CD8-positive, alpha-beta T cell (primary cell): ENCODE measurements at regions of chr22 and their contacts with region 1.

Region 1: GRCh38 chr22:41957941-41958556 is 6.1 kb downstream of the SMIM45 start:
- DNase-seq: peak in 1 of 9 experiments; percentile 32
- ATAC-seq: peak; percentile 35
- H3K4me3 ChIP-seq: no peak overlapping the region
- H3K4me3 Mint-ChIP-seq: peak overlapping the region; percentile 11
- H3K27ac ChIP-seq: no peak overlapping the region
- H3K27ac Mint-ChIP-seq: no peak overlapping the region
- H3K4me1 ChIP-seq: no peaks in the 10 kb centered on the region
- H3K4me1 Mint-ChIP-seq: peaks cover 3% of the 10 kb centered on the region
- H3K27me3 ChIP-seq: peaks cover 0 to 6% of the 10 kb centered on the region in 2 experiments
- H3K27me3 Mint-ChIP-seq: no peaks in the 10 kb centered on the region
- CTCF ChIP-seq: peak; percentile 53

Region 2: GRCh38 chr22:41822317-41823060 is 135.6 kb before region 1 on chr22:
- CTCF ChIA-PET with region 1: interaction called, 3 read pairs
- POLR2A ChIA-PET with region 1: no interaction called
- intact Hi-C with region 1: loop called (anchors 1 kb)
- DNase-seq: peak in 5 of 9 experiments; percentile 21 to 88 (median 48)
- ATAC-seq: peak; percentile 95
- H3K4me3 ChIP-seq: no peak overlapping the region
- H3K4me3 Mint-ChIP-seq: no peak overlapping the region
- H3K27ac ChIP-seq: no peak overlapping the region
- H3K27ac Mint-ChIP-seq: peak overlapping the region; percentile 72
- H3K4me1 ChIP-seq: no peaks in the 10 kb centered on the region
- H3K4me1 Mint-ChIP-seq: peaks cover 8% of the 10 kb centered on the region
- H3K27me3 ChIP-seq: no peaks in the 10 kb centered on the region
- H3K27me3 Mint-ChIP-seq: no peaks in the 10 kb centered on the region
- CTCF ChIP-seq: peak; percentile 57

Region 3: GRCh38 chr22:41925655-41926460 is 32.2 kb before region 1 on chr22:
- CTCF ChIA-PET with region 1: interaction called, 3 read pairs
- POLR2A ChIA-PET with region 1: no interaction called
- intact Hi-C with region 1: loop called in 1 of 2 experiments (anchors 1 kb)
- DNase-seq: peak; percentile 61 to 86 (median 80)
- ATAC-seq: peak; percentile 75
- H3K4me3 ChIP-seq: peak overlapping the region; percentile 43 to 57
- H3K4me3 Mint-ChIP-seq: peak overlapping the region; percentile 85
- H3K27ac ChIP-seq: no peak overlapping the region
- H3K27ac Mint-ChIP-seq: peak overlapping the region; percentile 69
- H3K4me1 ChIP-seq: peaks cover 18% of the 10 kb centered on the region
- H3K4me1 Mint-ChIP-seq: peaks cover 25% of the 10 kb centered on the region
- H3K27me3 ChIP-seq: peaks cover 0 to 3% of the 10 kb centered on the region in 2 experiments
- H3K27me3 Mint-ChIP-seq: no peaks in the 10 kb centered on the region
- CTCF ChIP-seq: peak; percentile 88

Region 4: GRCh38 chr22:41979423-41980250 is 21.6 kb after region 1 on chr22:
- CTCF ChIA-PET with region 1: no interaction called
- POLR2A ChIA-PET with region 1: no interaction called
- intact Hi-C with region 1: no loop called
- DNase-seq: no peak
- ATAC-seq: no peak
- H3K4me3 ChIP-seq: no peak overlapping the region
- H3K4me3 Mint-ChIP-seq: no peak overlapping the region
- H3K27ac ChIP-seq: no peak overlapping the region
- H3K27ac Mint-ChIP-seq: no peak overlapping the region
- H3K4me1 ChIP-seq: peaks cover 5% of the 10 kb centered on the region
- H3K4me1 Mint-ChIP-seq: peaks cover 9% of the 10 kb centered on the region
- H3K27me3 ChIP-seq: peaks cover 7 to 11% of the 10 kb centered on the region in 2 experiments
- H3K27me3 Mint-ChIP-seq: peaks cover 32% of the 10 kb centered on the region
- CTCF ChIP-seq: no peak

Region 5: DNA sequence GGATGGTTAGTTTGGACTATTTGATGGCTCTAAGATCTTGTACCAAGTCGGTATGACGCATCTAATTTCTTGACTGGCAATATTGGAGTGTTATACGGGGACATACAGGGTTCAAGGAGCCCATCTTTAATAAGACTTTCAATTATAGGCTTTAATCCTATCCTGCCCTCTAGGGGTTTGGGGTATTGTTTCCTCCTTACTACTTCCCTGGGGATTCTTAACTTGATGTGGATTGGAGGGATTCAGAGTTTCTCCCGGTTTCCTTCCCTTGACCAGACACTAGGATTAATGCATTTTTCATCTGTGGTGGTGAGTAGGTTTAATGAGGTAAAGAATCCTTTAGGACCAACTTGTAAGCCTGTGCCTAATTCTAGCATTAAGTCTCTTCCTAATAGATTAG is 153.7 kb after region 1 on chr22:
- CTCF ChIA-PET with region 1: no interaction called
- POLR2A ChIA-PET with region 1: no interaction called
- intact Hi-C with region 1: loop called in 1 of 2 experiments (anchors 2 kb)
- DNase-seq: no peak
- ATAC-seq: no peak
- H3K4me3 ChIP-seq: no peak overlapping the region
- H3K4me3 Mint-ChIP-seq: no peak overlapping the region
- H3K27ac ChIP-seq: no peak overlapping the region
- H3K27ac Mint-ChIP-seq: no peak overlapping the region
- H3K4me1 ChIP-seq: no peaks in the 10 kb centered on the region
- H3K4me1 Mint-ChIP-seq: no peaks in the 10 kb centered on the region
- H3K27me3 ChIP-seq: no peaks in the 10 kb centered on the region
- H3K27me3 Mint-ChIP-seq: no peaks in the 10 kb centered on the region
- CTCF ChIP-seq: no peak

Region 6: GRCh38 chr22:42376711-42377554 is 418.9 kb after region 1 on chr22:
- CTCF ChIA-PET with region 1: no interaction called
- POLR2A ChIA-PET with region 1: no interaction called
- intact Hi-C with region 1: no loop called
- DNase-seq: no peak
- ATAC-seq: no peak
- H3K4me3 ChIP-seq: no peak overlapping the region
- H3K4me3 Mint-ChIP-seq: no peak overlapping the region
- H3K27ac ChIP-seq: no peak overlapping the region
- H3K27ac Mint-ChIP-seq: no peak overlapping the region
- H3K4me1 ChIP-seq: no peaks in the 10 kb centered on the region
- H3K4me1 Mint-ChIP-seq: peaks cover 2% of the 10 kb centered on the region
- H3K27me3 ChIP-seq: no peaks in the 10 kb centered on the region
- H3K27me3 Mint-ChIP-seq: no peaks in the 10 kb centered on the region
- CTCF ChIP-seq: no peak